Activated CD8-positive, alpha-beta T cell treated with anti-CD3 and anti-CD28 coated beads, Interleukin-2, amount 10 ng/mL, durations not matched to agents 7 days and 5 days (primary cell): ENCODE measurements at regions of chr20 and their contacts with region 1.

Region 1: GRCh38 chr20:62302341-62303058 is at the start of gene ADRM1:
- DNase-seq: peak; percentile 96
- ATAC-seq: peak; percentile 89
- H3K4me3 Mint-ChIP-seq: peak within 1 kb of the TSS; percentile 91
- H3K27ac Mint-ChIP-seq: peak within 1 kb of the TSS; percentile 98
- H3K4me1 Mint-ChIP-seq: peaks cover 28% of the 10 kb centered on the region
- H3K27me3 Mint-ChIP-seq: no peaks in the 10 kb centered on the region
- total RNA-seq, gene ADRM1: 97.7 to 103 TPM

Region 2: DNA sequence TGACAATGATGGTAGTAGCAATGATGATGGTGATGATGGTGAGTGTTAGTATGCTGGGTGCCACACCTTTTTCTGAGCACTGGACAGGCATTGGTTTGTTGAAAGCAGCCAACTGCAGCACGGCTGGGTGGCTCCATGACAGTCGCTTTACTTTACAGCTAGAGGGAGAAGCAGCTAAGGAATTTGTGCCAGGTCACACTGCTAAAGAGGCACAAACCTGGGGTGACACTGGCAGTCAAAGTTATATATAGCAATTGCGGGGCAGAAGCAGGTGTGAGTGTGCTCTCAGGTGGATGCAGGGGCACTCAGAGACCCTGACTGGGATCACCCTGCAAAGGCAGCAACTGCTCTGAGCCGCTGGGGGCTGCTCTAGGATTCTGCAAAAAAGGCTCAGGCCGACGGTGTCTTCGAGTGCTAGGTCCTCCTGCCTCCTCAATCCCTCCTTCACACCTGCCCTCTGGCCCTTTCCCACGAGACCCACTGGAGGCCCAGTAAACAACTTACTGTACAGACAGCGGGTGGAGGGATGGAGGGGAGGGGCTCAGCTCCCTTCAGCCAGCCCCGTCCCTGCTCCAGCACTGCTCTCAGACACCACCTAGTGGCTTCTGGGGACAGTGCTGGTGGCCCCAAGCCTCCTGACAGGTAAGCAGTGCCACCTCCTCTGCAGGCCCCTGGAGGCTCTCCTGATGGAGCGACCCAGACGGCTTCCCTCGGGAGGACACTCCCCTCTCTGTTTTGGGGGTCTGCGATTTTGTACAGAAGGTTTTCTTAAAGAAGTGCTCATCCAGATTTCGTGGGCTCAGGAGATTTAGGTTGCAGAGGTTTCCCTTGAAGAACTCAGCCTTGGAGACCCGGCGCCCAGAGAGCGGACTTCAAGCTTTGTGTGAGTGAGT is 80.1 kb after region 1 on chr20:
- CTCF ChIA-PET with region 1: interaction called, 31 read pairs
- POLR2A ChIA-PET with region 1: interaction called, 3 read pairs
- DNase-seq: peak; percentile 83
- ATAC-seq: peak; percentile 66
- H3K4me3 Mint-ChIP-seq: no peak overlapping the region
- H3K27ac Mint-ChIP-seq: peak overlapping the region; percentile 45
- H3K4me1 Mint-ChIP-seq: peaks cover 30% of the 10 kb centered on the region
- H3K27me3 Mint-ChIP-seq: no peaks in the 10 kb centered on the region